ENCODE measurements at regions of chr16 and their contacts with region 1.

Region 1: GRCh38 chr16:85626191-85626981 is 13.3 kb downstream of the GSE1 start:
- DNase-seq: no peak
- ATAC-seq: no peak
- H3K4me3 Mint-ChIP-seq: peak overlapping the region in 7 of 10 donors; percentile 35 to 78 (median 50)
- H3K27ac Mint-ChIP-seq: peak overlapping the region in 7 of 10 donors; percentile 39 to 90 (median 62)
- H3K4me1 Mint-ChIP-seq: peaks cover 34 to 87% (median 69%) of the 10 kb centered on the region in 4 donors
- H3K27me3 Mint-ChIP-seq: no peaks in the 10 kb centered on the region

Region 2: DNA sequence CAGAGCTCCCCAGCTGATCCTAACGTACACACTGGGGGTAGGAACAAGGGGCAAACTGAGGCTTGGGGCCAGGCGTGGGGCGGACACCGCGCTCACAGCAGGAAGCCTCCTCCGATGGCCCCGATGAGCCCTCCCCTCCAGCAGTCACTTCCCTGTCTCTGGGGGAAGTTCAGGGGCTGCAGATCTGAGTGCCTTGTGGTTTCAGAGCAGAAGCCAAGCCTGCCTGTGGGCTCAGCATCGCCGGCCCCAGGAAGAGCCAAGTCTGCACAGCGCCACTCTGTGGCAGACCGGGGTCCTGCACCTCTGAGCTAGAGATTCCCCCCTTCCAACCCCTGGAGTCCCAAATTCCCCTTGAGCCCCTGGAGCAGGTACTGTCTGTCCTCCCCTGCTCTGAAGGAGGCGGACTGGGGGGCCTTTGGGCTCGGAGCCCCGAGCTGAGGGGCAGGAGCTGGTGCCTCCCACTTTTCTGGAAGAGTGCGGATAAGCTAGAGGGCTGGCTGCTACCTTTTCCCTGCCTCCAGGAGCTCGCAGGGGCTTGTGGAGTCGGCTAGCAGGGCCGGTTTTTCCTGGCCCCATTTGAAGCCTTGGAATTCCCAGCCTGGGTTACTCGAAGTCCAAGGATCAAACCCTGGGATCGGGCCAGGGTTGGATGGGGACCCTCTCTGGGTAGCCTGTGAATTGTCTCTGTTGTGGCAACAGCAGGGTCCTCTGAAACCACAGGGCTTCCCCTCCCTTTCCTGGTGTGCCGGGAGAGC is 10.4 kb before region 1 on chr16:
- POLR2A ChIA-PET with region 1: interaction called, 16 read pairs
- DNase-seq: peak; percentile 76 to 93 (median 84)
- ATAC-seq: peak; percentile 63 to 76
- H3K4me3 Mint-ChIP-seq: peak overlapping the region; percentile 78 to 93 (median 86)
- H3K27ac Mint-ChIP-seq: peak overlapping the region; percentile 47 to 93 (median 82)
- H3K4me1 Mint-ChIP-seq: peaks cover 22 to 53% (median 50%) of the 10 kb centered on the region in 4 donors
- H3K27me3 Mint-ChIP-seq: no peaks in the 10 kb centered on the region

Measured in naive thymus-derived CD8-positive, alpha-beta T cell (primary cell).